ENCODE measurements at regions of chr13 and their contacts with region 1.

Region 1: DNA sequence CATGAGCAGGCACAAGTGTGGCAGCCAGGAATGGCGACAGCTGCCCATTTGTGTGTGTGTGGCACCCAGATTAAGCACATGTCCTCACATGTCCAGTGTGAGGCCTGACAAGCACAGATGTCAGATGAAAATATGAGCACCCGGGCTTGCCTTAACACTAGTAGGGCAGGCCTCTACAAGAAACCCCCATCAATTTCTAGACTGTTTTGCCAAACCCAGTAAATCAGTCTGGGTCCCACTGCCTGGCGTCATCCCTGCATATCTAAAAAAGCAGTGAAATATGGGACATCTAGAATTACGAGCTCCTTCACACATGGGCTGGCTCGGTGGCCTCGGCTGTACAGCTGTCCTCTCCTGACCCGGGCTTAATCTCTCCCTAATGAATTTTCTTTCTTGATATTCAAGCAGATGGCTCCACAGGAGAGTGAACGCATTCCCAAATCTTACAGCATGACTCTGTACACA is 432.7 kb downstream of the FOXO1 start:
- DNase-seq: no peak
- ATAC-seq: no peak
- H3K4me3 ChIP-seq: no peak overlapping the region
- H3K4me3 Mint-ChIP-seq: no peak overlapping the region
- H3K27ac ChIP-seq: no peak overlapping the region
- H3K27ac Mint-ChIP-seq: peak overlapping the region in 1 of 9 donors; percentile 28
- H3K4me1 ChIP-seq: no peaks in the 10 kb centered on the region
- H3K4me1 Mint-ChIP-seq: peaks cover 10 to 26% (median 15%) of the 10 kb centered on the region in 7 donors
- H3K27me3 ChIP-seq: no peaks in the 10 kb centered on the region
- H3K27me3 Mint-ChIP-seq: no peaks in the 10 kb centered on the region

Region 2: GRCh38 chr13:40251343-40252032 is 17.7 kb after region 1 on chr13:
- CTCF ChIA-PET with region 1: no interaction called
- POLR2A ChIA-PET with region 1: no interaction called
- intact Hi-C with region 1: loop called in 1 of 2 experiments (anchors 2 kb)
- DNase-seq: peak in 4 of 9 donors; percentile 7 to 15 (median 12)
- ATAC-seq: no peak
- H3K4me3 ChIP-seq: no peak overlapping the region
- H3K4me3 Mint-ChIP-seq: peak overlapping the region in 3 of 10 donors; percentile 1 to 16 (median 2)
- H3K27ac ChIP-seq: no peak overlapping the region
- H3K27ac Mint-ChIP-seq: peak overlapping the region in 6 of 9 donors; percentile 4 to 65 (median 10)
- H3K4me1 ChIP-seq: peaks cover 0 to 12% of the 10 kb centered on the region in 2 donors
- H3K4me1 Mint-ChIP-seq: peaks cover 8 to 39% (median 34%) of the 10 kb centered on the region in 7 donors
- H3K27me3 ChIP-seq: no peaks in the 10 kb centered on the region
- H3K27me3 Mint-ChIP-seq: no peaks in the 10 kb centered on the region

Region 3: GRCh38 chr13:40271931-40272775 is 38.4 kb after region 1 on chr13:
- CTCF ChIA-PET with region 1: no interaction called
- POLR2A ChIA-PET with region 1: no interaction called
- intact Hi-C with region 1: no loop called
- DNase-seq: peak in 1 of 9 donors; percentile 36
- ATAC-seq: peak; percentile 42
- H3K4me3 ChIP-seq: no peak overlapping the region
- H3K4me3 Mint-ChIP-seq: peak overlapping the region in 2 of 10 donors; percentile 4 to 5
- H3K27ac ChIP-seq: no peak overlapping the region
- H3K27ac Mint-ChIP-seq: peak overlapping the region in 6 of 9 donors; percentile 0 to 73 (median 42)
- H3K4me1 ChIP-seq: peaks cover 4 to 17% of the 10 kb centered on the region in 2 donors
- H3K4me1 Mint-ChIP-seq: peaks cover 20 to 65% (median 41%) of the 10 kb centered on the region in 7 donors
- H3K27me3 ChIP-seq: no peaks in the 10 kb centered on the region
- H3K27me3 Mint-ChIP-seq: peaks cover 0 to 2% (median 0%) of the 10 kb centered on the region in 5 donors

Region 4: DNA sequence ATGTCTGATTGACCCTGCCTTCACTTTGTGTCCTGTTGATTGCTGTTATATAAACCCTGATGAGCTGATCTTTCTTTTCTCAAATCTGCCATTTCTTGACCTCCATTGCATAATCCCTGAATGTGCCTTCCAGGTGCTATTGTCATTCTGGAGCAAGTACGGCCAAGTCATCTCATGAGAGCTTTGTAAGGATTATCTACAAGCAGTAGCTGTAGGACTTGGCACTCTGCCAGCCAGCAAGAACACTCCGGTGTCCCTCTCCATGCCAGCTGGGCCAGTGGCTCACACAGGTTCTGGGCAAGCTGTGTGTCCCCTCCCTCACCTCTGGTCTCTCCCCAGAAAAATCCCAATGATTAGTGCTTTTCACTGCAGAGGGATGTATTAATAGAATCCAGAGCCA is 84.6 kb after region 1 on chr13:
- CTCF ChIA-PET with region 1: no interaction called
- POLR2A ChIA-PET with region 1: no interaction called
- intact Hi-C with region 1: no loop called
- DNase-seq: no peak
- ATAC-seq: no peak
- H3K4me3 ChIP-seq: no peak overlapping the region
- H3K4me3 Mint-ChIP-seq: peak overlapping the region in 1 of 10 donors; percentile 20
- H3K27ac ChIP-seq: no peak overlapping the region
- H3K27ac Mint-ChIP-seq: peak overlapping the region in 5 of 9 donors; percentile 17 to 85 (median 67)
- H3K4me1 ChIP-seq: peaks cover 5 to 35% of the 10 kb centered on the region in 2 donors
- H3K4me1 Mint-ChIP-seq: peaks cover 39 to 71% (median 68%) of the 10 kb centered on the region in 7 donors
- H3K27me3 ChIP-seq: no peaks in the 10 kb centered on the region
- H3K27me3 Mint-ChIP-seq: no peaks in the 10 kb centered on the region